AG04449 (cell line): ENCODE measurements at regions of chr17 and their contacts with region 1.

Region 1: DNA sequence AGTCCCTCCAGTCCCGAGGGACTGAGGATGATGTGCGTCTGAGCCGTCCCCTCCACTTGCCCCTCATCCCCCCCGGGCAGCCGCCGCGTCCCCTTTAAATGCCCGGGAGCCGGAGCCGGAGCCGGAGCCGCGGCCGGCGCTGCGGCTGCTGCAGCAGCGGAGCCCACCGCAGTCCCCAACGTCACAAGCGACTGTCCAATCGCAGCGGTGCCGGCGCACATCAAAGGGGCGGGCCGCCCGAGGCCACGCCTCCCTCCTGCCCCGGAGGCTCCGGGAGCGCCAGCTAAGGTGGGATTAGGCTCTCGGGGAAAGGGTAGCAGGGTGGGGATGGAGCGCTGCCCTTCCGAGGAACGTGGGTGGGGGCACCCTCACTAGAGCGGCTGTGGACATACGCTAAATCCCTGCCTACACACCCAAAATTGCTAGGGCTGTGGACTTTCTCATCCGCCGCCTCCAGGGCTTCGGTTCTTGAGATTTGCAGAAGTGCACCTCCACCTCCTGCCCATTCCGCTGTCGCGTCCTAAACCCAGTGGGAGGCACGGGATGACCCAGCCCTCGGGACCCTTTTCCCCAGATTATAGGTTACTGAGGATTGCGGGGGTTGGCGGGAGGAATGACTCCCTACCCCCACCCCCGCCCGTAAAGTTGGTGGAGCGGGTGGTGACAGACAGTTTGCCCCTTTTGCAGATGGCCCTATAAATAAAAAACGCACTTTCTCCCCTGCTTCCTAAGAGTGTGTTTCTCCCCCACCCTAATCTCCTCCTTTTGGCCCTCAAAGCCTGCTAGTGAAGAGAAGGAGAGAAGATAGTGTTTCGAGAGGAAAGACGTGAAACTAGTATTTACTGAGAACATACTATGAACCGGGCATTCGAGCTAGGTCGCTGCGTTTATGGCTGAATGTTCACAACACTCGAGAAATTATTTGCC is at the start of gene PHOSPHO1:
- DNase-seq: no peak
- H3K4me3 ChIP-seq: peak within 1 kb of the TSS; percentile 85
- CTCF ChIP-seq: no peak

Region 2: DNA sequence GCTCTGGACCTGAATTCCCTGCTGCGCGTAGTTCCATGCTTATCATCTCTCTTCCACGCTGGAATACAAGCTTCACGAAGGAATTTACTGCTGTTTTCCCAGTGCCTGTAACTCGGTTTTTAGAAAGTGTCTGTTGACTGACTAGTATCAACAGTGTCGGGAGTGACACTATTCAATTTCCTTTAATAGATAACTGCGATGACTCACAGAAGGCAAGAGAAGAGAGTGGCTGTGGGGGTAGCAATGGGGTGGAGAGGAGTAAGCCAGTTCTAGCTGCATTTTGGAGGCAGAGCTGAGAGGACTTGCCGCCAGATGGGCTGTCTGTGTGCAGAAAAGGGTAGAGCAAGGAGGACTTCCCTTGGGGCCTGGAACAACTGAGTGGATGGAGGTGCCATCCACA is 73.1 kb before region 1 on chr17:
- CTCF ChIA-PET with region 1: interaction called, 12 read pairs
- POLR2A ChIA-PET with region 1: no interaction called
- DNase-seq: no peak
- H3K4me3 ChIP-seq: no peak overlapping the region
- CTCF ChIP-seq: no peak

Region 3: GRCh38 chr17:49170216-49170615 is 60.7 kb before region 1 on chr17:
- CTCF ChIA-PET with region 1: interaction called, 14 read pairs
- POLR2A ChIA-PET with region 1: no interaction called
- DNase-seq: no peak
- H3K4me3 ChIP-seq: no peak overlapping the region
- CTCF ChIP-seq: no peak

Region 4: DNA sequence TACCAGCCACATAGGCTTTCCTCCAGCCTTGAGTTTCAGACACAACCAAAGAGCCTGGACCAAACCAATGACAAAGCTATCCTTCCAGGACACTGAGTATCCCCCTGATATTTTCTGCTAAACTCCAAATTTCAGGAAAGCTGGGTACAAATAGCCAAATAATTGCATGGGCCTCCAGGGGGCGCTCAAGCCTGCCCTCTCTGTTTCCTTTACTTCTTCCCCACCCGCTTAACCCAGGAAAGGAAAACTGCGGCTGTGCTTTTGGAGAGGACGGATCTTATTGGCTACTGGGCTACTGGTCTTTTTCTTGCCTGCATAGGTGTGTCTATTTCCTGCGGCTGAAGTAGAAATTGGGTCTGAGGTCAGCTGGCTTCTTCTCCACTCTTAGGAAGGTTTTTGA is 50.6 kb before region 1 on chr17:
- CTCF ChIA-PET with region 1: interaction called, 136 read pairs
- POLR2A ChIA-PET with region 1: no interaction called
- DNase-seq: no peak
- H3K4me3 ChIP-seq: no peak overlapping the region
- CTCF ChIP-seq: peak; percentile 70

Region 5: DNA sequence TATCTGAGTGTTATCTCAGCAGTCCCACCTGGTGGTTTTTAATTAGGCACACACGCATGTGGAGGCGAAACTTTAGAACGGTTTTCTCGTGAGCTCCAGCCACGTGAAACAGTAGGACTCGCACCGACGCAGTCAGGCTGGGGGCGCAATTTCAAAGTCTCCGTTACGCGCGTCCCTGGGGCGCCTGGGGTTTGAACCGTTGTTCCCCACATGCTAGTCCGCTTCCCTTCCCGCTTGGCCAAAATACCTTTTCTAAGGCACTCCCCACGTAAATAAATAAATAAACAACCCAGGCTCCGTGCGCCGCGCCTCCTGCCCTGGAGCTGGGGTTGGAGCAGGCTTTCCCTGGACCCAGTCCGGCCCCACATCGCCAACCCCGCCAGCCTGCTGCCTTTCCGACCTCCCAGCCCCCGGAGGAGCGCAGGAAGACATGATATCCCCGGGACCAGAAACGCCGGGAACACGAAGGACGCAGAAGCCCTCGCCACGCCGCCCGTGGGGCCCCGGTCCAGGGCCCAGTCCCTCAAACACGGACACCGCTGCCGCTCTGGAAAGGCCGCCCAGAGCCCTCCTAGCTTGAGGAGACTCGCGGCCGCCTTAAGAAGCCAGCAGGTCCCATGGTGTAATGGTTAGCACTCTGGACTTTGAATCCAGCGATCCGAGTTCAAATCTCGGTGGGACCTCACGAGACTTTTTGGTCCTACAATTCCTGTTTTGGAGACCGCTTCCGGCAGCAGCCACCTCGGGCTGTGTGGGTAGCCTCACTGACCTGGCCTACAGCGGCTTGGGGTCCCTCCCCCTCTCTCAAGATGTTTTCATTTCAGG is 38.8 kb before region 1 on chr17:
- CTCF ChIA-PET with region 1: interaction called, 165 read pairs
- POLR2A ChIA-PET with region 1: no interaction called
- DNase-seq: peak; percentile 41
- H3K4me3 ChIP-seq: peak overlapping the region; percentile 83
- CTCF ChIP-seq: peak; percentile 40

Region 6: GRCh38 chr17:49210158-49211029 is 20.5 kb before region 1 on chr17 and contains the starts of genes ABI3 and GNGT2:
- CTCF ChIA-PET with region 1: interaction called, 165 read pairs
- POLR2A ChIA-PET with region 1: no interaction called
- DNase-seq: no peak
- H3K4me3 ChIP-seq: peak within 1 kb of the TSS; percentile 29
- CTCF ChIP-seq: no peak

Region 7: GRCh38 chr17:49217651-49218413 is 13.1 kb before region 1 on chr17:
- CTCF ChIA-PET with region 1: interaction called, 73 read pairs
- POLR2A ChIA-PET with region 1: interaction called, 3 read pairs
- DNase-seq: no peak
- H3K4me3 ChIP-seq: no peak overlapping the region
- CTCF ChIP-seq: no peak